Right lobe of liver (tissue), 6 donors: ENCODE measurements at regions of chr2 and their contacts with region 1.

Region 1: DNA sequence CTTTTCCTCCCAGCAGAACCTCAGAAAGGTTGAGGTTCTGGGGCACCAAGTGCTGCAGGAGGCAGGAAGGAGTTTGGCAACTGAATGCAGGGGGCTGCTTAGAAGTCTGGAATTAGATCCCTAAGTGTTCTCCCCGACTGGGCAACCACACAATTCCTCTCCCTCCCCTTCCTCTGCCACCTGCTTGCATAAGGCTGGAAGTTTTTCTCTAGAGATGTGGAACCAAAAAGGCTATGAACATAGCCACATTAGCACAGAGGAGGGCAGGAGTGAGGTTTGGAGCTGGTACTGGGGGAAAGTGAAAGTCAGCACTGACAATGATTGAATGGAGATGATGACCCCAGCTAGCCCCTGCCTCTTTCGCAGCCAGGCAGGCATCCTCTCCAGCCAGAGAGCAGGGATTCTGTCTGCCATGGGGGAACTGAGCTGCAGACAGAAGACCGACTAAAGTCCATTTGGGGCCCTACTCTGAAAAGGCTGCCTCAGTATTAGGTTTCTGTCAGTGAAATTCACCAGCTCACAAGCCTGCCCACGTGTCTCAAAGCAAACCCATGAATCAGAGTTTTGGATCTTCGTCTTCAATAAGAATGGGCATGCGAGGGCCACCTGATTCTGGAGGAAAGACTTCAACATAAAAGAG is 87.9 kb upstream of the ITGA6 start:
- DNase-seq: peak in 2 of 3 donors; percentile 24 to 56
- ATAC-seq: peak; percentile 64 to 75 (median 70)
- H3K4me3 ChIP-seq: peak overlapping the region in 1 of 3 donors; percentile 2
- H3K27ac ChIP-seq: peak overlapping the region; percentile 53 to 63 (median 60)
- H3K4me1 ChIP-seq: peaks cover 0 to 25% (median 3%) of the 10 kb centered on the region in 4 donors
- H3K27me3 ChIP-seq: no peaks in the 10 kb centered on the region
- CTCF ChIP-seq: peak; percentile 13 to 32 (median 25)
- POLR2A ChIP-seq: no peak

Region 2: DNA sequence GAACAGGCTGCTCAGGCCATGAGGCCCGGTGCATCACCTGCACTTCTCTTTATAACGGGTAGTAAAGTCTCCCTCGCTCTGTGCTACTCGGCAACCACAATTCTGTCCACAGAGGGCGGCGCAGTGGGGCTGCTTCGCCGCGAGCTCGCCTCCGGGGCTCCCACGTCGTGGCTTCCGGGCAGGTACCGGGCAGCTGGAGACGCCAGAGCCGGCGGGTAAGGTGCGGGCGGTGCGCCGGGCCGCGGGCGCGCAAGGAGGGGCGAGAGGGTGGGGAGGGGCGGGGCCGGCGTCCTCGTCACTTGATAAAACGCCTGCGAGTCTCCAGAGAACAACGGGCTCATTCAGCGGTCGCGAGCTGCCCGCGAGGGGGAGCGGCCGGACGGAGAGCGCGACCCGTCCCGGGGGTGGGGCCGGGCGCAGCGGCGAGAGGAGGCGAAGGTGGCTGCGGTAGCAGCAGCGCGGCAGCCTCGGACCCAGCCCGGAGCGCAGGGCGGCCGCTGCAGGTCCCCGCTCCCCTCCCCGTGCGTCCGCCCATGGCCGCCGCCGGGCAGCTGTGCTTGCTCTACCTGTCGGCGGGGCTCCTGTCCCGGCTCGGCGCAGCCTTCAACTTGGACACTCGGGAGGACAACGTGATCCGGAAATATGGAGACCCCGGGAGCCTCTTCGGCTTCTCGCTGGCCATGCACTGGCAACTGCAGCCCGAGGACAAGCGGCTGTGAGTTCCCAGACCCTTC is 87.9 kb after region 1 on chr2 and contains the start of gene ITGA6:
- intact Hi-C with region 1: no loop called
- DNase-seq: peak; percentile 87 to 89 (median 89)
- ATAC-seq: peak; percentile 87 to 90 (median 89)
- H3K4me3 ChIP-seq: peak within 1 kb of the TSS; percentile 68 to 85 (median 84)
- H3K27ac ChIP-seq: peak within 1 kb of the TSS; percentile 69 to 88 (median 77)
- H3K4me1 ChIP-seq: peaks cover 0 to 22% (median 6%) of the 10 kb centered on the region in 4 donors
- H3K27me3 ChIP-seq: no peaks in the 10 kb centered on the region
- CTCF ChIP-seq: peak in 2 of 4 donors; percentile 23 to 33
- POLR2A ChIP-seq: peak; percentile 90
- total RNA-seq, gene ITGA6: 10.7 to 26.8 (median 17.2) TPM

Region 3: GRCh38 chr2:172456002-172456401 is 116.5 kb after region 1 on chr2:
- intact Hi-C with region 1: loop called in 1 of 2 experiments (anchors 10 kb)
- DNase-seq: no peak
- ATAC-seq: peak in 1 of 4 donors; percentile 17
- H3K4me3 ChIP-seq: no peak overlapping the region
- H3K27ac ChIP-seq: no peak overlapping the region
- H3K4me1 ChIP-seq: peaks cover 0 to 14% (median 0%) of the 10 kb centered on the region in 4 donors
- H3K27me3 ChIP-seq: no peaks in the 10 kb centered on the region
- CTCF ChIP-seq: no peak
- POLR2A ChIP-seq: no peak